Activated CD8-positive, alpha-beta T cell treated with anti-CD3 and anti-CD28 coated beads, Interleukin-2, amount 10 ng/mL, durations not matched to agents 7 days and 5 days (primary cell): ENCODE measurements at regions of chr2 and their contacts with region 1.

Region 1: DNA sequence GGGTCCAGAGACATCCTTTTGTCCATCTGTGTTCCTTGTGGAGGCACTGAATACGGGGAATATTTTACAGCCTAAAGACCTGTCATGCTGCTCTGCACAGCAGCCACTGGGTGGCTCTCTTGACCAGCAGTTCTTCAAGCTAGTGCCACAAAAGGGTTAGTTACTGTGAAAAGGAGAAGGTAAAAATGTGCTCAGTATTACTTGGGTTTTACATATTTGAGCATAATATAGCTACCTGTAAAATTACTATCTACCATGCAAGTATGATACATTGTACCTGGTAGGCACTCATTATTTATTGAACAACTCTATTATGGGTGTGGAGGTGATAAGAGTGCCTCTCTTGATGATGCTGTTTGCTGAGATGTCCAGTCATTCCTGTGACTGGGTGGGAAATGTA is 23.6 kb downstream of the FZD5 start:
- DNase-seq: peak; percentile 58
- ATAC-seq: peak; percentile 67
- H3K4me3 Mint-ChIP-seq: no peak overlapping the region
- H3K27ac Mint-ChIP-seq: no peak overlapping the region
- H3K4me1 Mint-ChIP-seq: no peaks in the 10 kb centered on the region
- H3K27me3 Mint-ChIP-seq: no peaks in the 10 kb centered on the region

Region 2: GRCh38 chr2:207725873-207726578 is 20.1 kb before region 1 on chr2:
- CTCF ChIA-PET with region 1: interaction called, 12 read pairs
- POLR2A ChIA-PET with region 1: no interaction called
- DNase-seq: no peak
- ATAC-seq: no peak
- H3K4me3 Mint-ChIP-seq: no peak overlapping the region
- H3K27ac Mint-ChIP-seq: no peak overlapping the region
- H3K4me1 Mint-ChIP-seq: peaks cover 15% of the 10 kb centered on the region
- H3K27me3 Mint-ChIP-seq: no peaks in the 10 kb centered on the region

Region 3: GRCh38 chr2:207734264-207734635 is 11.9 kb before region 1 on chr2:
- CTCF ChIA-PET with region 1: interaction called, 11 read pairs
- POLR2A ChIA-PET with region 1: no interaction called
- DNase-seq: no peak
- ATAC-seq: no peak
- H3K4me3 Mint-ChIP-seq: no peak overlapping the region
- H3K27ac Mint-ChIP-seq: no peak overlapping the region
- H3K4me1 Mint-ChIP-seq: peaks cover 3% of the 10 kb centered on the region
- H3K27me3 Mint-ChIP-seq: no peaks in the 10 kb centered on the region

Region 4: GRCh38 chr2:207974216-207974605 is 228.1 kb after region 1 on chr2:
- CTCF ChIA-PET with region 1: interaction called, 47 read pairs
- POLR2A ChIA-PET with region 1: no interaction called
- DNase-seq: no peak
- ATAC-seq: no peak
- H3K4me3 Mint-ChIP-seq: no peak overlapping the region
- H3K27ac Mint-ChIP-seq: no peak overlapping the region
- H3K4me1 Mint-ChIP-seq: peaks cover 9% of the 10 kb centered on the region
- H3K27me3 Mint-ChIP-seq: no peaks in the 10 kb centered on the region

Region 5: DNA sequence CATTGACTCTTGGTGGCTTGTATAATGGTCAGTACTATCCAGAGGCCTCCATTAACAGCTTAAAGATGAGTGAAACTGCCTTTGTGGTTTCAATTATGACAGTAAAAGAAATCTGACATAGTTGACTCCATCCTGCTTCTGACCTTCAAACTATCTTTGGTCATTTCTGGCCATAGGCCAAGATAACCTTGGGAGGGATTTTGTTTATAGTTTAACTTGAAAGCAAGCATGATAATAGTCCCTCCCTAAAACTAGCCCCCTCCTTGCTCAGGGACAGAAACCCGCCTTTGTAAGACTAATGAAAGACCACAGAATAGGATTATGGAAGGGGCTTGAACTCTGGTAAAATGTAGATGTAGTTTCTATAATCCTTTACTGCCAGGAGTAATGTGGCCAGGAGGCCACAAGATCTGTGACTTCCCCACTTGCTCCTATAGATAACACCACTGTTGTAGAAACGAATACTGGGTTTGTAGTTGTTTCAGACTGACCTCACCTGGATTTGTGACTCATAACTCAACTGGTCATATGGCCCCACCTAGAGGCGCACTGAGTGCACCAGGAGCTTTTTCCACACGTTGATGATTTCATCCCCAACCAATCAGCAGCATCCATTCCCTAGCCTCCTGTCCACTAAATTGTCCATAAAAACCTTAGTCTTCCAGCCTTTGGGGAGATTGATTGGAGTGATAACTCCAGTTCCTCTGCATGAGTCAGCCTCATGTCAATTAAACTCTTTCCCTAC is 287.8 kb after region 1 on chr2:
- CTCF ChIA-PET with region 1: interaction called, 76 read pairs
- POLR2A ChIA-PET with region 1: no interaction called
- DNase-seq: peak; percentile 48
- ATAC-seq: peak; percentile 69
- H3K4me3 Mint-ChIP-seq: no peak overlapping the region
- H3K27ac Mint-ChIP-seq: no peak overlapping the region
- H3K4me1 Mint-ChIP-seq: no peaks in the 10 kb centered on the region
- H3K27me3 Mint-ChIP-seq: peaks cover 6% of the 10 kb centered on the region

Region 6: GRCh38 chr2:208040199-208041171 is 294.4 kb after region 1 on chr2:
- CTCF ChIA-PET with region 1: interaction called, 76 read pairs
- POLR2A ChIA-PET with region 1: no interaction called
- DNase-seq: peak; percentile 82
- ATAC-seq: peak; percentile 77
- H3K4me3 Mint-ChIP-seq: no peak overlapping the region
- H3K27ac Mint-ChIP-seq: no peak overlapping the region
- H3K4me1 Mint-ChIP-seq: no peaks in the 10 kb centered on the region
- H3K27me3 Mint-ChIP-seq: no peaks in the 10 kb centered on the region

Region 7: DNA sequence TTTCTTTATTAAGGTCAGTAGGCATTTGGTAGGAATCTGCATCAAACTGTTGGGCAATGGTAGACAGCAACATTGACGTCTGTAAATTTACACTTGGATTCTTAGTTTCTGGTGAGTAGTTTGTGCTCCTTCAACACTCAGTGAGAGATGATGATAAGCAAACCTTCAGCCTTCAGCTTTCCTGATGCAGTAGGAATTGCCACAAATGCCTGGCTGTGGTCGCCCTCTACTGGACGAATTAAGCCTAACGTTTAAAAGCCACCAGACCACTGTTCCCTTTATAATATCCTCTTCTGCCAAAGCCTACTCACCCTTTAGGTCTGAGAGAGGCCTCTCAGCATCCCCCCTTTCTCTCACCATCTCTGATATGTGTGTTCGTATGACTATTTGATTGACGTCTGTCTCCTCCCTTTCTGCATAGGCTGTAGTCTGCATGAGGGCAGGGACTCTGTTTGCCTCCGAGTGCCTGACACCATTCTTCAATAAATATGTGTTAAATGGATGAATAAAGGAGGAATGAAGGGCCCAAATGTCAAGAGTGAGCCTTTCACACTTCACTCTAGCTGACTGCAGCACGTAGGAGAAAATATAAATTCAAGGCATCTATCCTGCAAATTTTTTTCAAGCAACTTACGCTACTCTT is 326.2 kb after region 1 on chr2:
- CTCF ChIA-PET with region 1: interaction called, 17 read pairs
- POLR2A ChIA-PET with region 1: no interaction called
- DNase-seq: peak; percentile 71
- ATAC-seq: peak; percentile 73
- H3K4me3 Mint-ChIP-seq: no peak overlapping the region
- H3K27ac Mint-ChIP-seq: no peak overlapping the region
- H3K4me1 Mint-ChIP-seq: no peaks in the 10 kb centered on the region
- H3K27me3 Mint-ChIP-seq: peaks cover 2% of the 10 kb centered on the region